ENCODE measurements at regions of chrX and their contacts with region 1.

Region 1: DNA sequence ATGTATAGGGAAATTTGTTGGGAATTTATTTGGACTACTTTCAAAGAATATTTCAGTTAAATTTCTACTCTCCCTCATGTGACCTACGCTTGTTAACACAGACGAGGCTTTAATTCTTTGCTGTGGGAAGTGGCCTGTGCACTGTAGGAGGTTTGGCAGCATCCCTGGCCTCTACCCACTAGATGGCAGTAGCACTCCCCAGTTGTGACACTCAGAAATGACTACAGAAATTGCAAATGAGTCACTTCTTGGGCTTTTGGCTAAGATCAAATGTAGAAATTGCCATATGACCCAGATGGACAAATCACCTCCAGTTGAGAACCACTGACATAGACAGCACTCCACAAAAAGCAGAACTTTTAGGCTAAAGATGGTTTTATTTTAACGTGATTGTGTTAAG is 22.1 kb downstream of the PIR start:
- DNase-seq: peak; percentile 67
- H3K4me3 Mint-ChIP-seq: no peak overlapping the region
- H3K27ac Mint-ChIP-seq: no peak overlapping the region
- H3K4me1 Mint-ChIP-seq: no peaks in the 10 kb centered on the region
- H3K27me3 Mint-ChIP-seq: no peaks in the 10 kb centered on the region

Region 2: DNA sequence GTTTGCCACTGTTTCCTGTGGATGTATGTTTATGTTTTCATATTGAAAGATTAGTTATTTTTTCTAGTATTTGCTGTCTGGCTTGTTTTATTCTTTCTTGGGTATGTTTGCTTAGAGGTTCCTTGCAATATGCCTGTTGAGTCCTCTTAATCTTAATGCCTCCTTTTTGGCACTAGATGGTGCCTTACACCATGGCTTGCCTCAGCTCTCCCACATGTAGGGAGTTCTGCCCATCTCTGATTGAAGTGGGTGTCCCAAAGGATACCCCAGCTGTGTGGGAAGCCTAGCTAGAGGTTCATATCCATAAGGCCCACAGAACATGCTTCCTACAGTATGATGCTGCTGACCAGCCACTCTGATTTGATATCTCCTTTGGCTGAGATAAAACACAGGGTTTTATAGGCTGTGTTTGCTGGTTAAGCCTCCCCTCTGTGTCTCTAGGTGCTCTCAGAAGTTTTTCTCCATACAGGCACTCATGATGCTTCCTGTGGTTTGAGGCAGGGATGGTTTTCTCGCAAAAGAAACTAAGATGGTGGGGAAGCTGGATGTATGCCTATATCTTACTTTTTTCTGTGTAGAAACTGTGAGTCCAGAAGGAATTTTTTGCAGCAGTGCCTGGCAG is 363.5 kb before region 1 on chrX:
- CTCF ChIA-PET with region 1: no interaction called
- POLR2A ChIA-PET with region 1: no interaction called
- intact Hi-C with region 1: loop called (anchors 5 kb)
- DNase-seq: peak; percentile 9
- H3K4me3 Mint-ChIP-seq: no peak overlapping the region
- H3K27ac Mint-ChIP-seq: no peak overlapping the region
- H3K4me1 Mint-ChIP-seq: peaks cover 12% of the 10 kb centered on the region
- H3K27me3 Mint-ChIP-seq: peaks cover 3% of the 10 kb centered on the region

Region 3: DNA sequence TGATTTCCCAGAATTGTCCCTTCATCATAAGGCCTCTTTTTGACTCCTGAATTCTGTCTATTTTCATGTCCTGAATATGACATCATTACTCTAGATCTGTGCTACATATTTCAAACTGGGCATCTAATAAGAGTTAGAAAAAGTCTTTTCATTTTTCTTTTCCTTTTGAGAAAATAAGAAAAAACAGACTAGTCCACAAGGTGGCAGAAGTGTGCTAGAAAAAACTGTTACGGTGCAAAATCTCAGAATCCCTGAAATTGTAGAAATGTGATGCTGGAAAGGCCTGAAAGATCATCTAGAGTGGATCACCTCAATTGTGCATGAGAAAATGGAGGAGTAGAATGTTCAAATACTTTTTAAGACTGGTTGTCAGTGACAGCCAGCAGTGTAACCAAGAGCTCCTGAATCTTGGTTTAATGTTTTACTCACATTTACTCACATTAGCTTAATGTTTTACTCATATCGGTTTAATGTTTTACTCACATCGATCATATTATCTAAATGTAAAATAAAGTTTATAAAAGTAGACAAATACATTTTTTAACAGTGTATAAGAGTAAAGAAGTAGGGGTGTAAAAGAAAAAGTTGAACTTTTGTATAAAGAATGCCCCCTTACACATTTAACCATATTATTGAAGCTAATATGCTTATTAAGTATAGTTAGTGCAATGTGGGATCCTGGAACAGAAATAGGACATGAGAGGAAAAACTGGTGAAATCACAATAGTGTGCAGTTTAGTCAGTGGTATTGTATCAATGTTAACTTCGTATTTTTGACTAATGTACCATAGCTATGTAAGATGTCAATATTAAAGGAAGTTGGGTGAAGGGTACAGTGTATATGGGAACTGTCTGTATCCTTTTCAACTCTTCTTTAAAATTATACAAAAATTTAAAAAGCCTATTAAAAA is 170.8 kb before region 1 on chrX:
- CTCF ChIA-PET with region 1: interaction called, 7 read pairs
- POLR2A ChIA-PET with region 1: no interaction called
- intact Hi-C with region 1: loop called (anchors 2 kb)
- DNase-seq: no peak
- H3K4me3 Mint-ChIP-seq: no peak overlapping the region
- H3K27ac Mint-ChIP-seq: no peak overlapping the region
- H3K4me1 Mint-ChIP-seq: peaks cover 8% of the 10 kb centered on the region
- H3K27me3 Mint-ChIP-seq: no peaks in the 10 kb centered on the region

Region 4: DNA sequence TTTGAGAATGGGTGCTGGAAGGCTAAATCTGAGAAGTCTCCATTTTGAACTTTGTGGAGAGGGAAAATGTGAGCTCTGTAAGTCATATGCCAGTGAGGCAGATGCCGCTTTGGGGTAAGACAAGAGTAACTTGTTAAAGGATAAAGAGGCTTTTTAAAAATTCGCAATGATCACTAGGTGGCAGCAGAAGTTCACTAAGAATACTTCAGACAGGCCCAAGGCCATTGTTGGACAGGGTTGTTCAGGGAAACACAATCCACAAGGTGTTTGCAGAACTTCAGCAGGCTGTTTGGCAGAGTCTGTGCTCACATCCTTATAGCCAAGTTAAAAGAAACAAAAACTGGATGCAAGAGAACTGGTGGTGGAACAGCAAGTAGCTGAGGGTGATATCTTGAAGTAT is 122.0 kb before region 1 on chrX:
- CTCF ChIA-PET with region 1: interaction called, 11 read pairs
- POLR2A ChIA-PET with region 1: no interaction called
- intact Hi-C with region 1: loop called (anchors 1 kb)
- DNase-seq: no peak
- H3K4me3 Mint-ChIP-seq: no peak overlapping the region
- H3K27ac Mint-ChIP-seq: no peak overlapping the region
- H3K4me1 Mint-ChIP-seq: no peaks in the 10 kb centered on the region
- H3K27me3 Mint-ChIP-seq: peaks cover 1% of the 10 kb centered on the region

Region 5: GRCh38 chrX:15430584-15430983 is 40.4 kb before region 1 on chrX:
- CTCF ChIA-PET with region 1: no interaction called
- POLR2A ChIA-PET with region 1: no interaction called
- intact Hi-C with region 1: no loop called
- DNase-seq: no peak
- H3K4me3 Mint-ChIP-seq: no peak overlapping the region
- H3K27ac Mint-ChIP-seq: no peak overlapping the region
- H3K4me1 Mint-ChIP-seq: no peaks in the 10 kb centered on the region
- H3K27me3 Mint-ChIP-seq: peaks cover 17% of the 10 kb centered on the region

Region 6: GRCh38 chrX:15493118-15493962 is 22.3 kb after region 1 on chrX and contains the start of gene PIR:
- CTCF ChIA-PET with region 1: interaction called, 5 read pairs
- POLR2A ChIA-PET with region 1: no interaction called
- intact Hi-C with region 1: loop called (anchors 1 kb)
- DNase-seq: peak; percentile 80
- H3K4me3 Mint-ChIP-seq: peak within 1 kb of the TSS; percentile 79
- H3K27ac Mint-ChIP-seq: peak within 1 kb of the TSS; percentile 31
- H3K4me1 Mint-ChIP-seq: peaks cover 4% of the 10 kb centered on the region
- H3K27me3 Mint-ChIP-seq: no peaks in the 10 kb centered on the region
- total RNA-seq, gene PIR: 2.4 to 3.1 TPM

Region 7: DNA sequence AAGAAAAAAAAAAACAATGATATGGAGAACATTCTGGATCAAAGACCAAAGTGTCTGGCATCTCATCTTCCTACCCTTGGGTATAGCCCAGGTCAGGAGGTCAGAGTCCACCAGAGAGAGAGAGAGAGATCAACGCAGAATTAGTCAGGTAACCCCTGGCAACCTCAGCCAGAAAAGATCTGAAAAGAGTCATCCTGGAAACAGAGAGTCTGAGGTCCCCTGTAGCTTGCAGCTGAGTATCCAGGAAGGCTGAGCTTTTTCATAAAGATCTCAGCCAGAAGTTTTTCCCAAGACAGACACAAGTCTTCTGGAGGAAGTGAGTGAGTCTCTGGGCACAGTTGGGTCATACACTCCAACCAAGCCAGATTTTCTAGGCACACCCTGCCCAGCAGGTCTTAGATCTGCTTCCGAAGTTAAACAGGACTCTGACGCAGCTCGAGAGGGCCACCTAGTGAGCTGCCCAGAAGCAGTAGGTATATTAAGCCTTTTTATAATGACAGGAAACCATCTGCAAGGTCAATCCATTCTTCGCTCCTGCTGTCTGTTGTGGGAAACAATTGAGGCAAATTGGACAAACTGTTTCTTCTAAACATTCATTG is 94.1 kb after region 1 on chrX:
- CTCF ChIA-PET with region 1: interaction called, 11 read pairs
- POLR2A ChIA-PET with region 1: no interaction called
- intact Hi-C with region 1: loop called (anchors 1 kb)
- DNase-seq: peak; percentile 45
- H3K4me3 Mint-ChIP-seq: no peak overlapping the region
- H3K27ac Mint-ChIP-seq: no peak overlapping the region
- H3K4me1 Mint-ChIP-seq: no peaks in the 10 kb centered on the region
- H3K27me3 Mint-ChIP-seq: peaks cover 1% of the 10 kb centered on the region

Region 8: DNA sequence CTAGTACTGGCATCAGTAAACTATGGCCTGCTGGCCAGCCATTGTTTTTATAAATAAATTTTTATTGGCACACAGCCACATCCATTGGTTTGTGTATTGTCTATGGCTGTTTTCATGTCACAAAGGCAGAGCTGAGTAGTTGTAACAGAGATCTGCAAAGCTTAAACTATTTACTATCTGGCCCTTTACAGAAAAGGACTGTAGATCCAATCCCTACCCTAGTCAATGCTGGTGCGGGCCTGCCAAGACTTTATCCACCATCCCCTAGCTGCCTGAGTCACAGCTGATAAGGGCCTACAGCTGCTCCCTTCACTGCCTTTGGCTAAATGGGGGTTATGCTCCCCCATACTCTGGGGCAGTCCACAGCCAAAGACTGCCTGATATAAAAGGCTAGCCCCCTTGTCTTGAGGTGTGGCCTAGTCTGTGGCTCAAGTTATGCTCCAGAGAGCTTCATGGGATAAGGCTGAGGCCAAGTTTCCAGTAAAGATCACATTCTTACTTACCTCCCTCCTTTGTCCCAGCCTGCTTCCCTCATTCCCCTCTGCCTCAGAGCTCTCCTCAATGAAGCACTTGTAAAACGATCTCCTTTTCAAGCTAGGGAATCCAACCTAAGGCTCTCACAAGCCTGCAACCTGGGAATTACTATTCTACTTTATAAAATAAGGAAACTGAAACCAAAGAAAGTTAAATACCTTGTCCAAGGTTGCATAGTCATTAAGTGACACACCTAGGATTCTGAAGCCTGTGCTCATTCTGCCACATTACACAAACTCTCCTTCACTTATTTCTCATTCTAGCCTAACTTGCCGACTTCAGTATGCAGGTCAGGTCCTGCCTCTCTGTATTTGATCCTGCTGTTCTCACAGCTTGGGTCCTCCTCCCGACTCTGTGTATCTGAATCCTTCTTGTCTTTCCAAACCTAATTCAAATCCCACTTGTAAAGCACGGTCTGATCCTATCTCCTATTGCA is 109.0 kb after region 1 on chrX:
- CTCF ChIA-PET with region 1: no interaction called
- POLR2A ChIA-PET with region 1: no interaction called
- intact Hi-C with region 1: no loop called
- DNase-seq: no peak
- H3K4me3 Mint-ChIP-seq: no peak overlapping the region
- H3K27ac Mint-ChIP-seq: no peak overlapping the region
- H3K4me1 Mint-ChIP-seq: no peaks in the 10 kb centered on the region
- H3K27me3 Mint-ChIP-seq: peaks cover 2% of the 10 kb centered on the region

Region 9: GRCh38 chrX:16386126-16386525 is 915.1 kb after region 1 on chrX:
- CTCF ChIA-PET with region 1: no interaction called
- POLR2A ChIA-PET with region 1: no interaction called
- intact Hi-C with region 1: no loop called
- DNase-seq: no peak
- H3K4me3 Mint-ChIP-seq: no peak overlapping the region
- H3K27ac Mint-ChIP-seq: no peak overlapping the region
- H3K4me1 Mint-ChIP-seq: no peaks in the 10 kb centered on the region
- H3K27me3 Mint-ChIP-seq: peaks cover 2% of the 10 kb centered on the region